Tibial artery (tissue), 4 donors: ENCODE measurements at regions of chr19 and their contacts with region 1.

Region 1: DNA sequence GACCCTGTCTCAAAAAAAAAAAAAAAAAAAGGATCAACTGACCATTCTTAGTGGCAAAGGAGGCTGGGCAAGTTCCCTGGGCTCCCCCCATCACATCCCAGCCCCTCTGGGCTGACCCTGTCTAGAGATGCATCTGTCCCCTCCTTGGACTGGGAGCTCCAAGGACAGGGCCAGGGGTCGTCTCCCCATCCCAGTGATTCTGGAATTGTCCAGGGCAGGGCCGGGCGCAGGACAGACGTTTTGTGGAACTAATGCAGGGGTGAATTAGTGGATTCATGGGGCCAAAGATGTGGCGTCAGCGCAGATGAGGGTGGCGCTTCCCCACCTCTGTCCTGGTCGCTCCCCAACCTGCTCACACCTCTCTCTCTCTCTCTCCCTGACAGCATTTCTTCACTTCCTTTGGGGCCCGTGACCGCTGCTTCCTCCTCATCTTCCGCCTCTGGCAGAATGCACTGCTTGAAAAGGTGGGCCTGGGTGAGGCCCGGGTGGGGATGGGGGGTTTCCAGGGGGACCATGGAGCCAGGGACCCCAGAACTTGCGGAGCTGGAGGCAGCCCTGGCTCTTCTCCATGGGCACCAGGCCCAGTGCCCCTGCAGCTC is 11.1 kb downstream of the GRAMD1A start:
- DNase-seq: no peak
- H3K4me3 ChIP-seq: no peak overlapping the region
- H3K27ac ChIP-seq: no peak overlapping the region
- H3K4me1 ChIP-seq: peaks cover 0 to 5% (median 2%) of the 10 kb centered on the region in 4 donors
- H3K27me3 ChIP-seq: no peaks in the 10 kb centered on the region
- CTCF ChIP-seq: no peak

Region 2: GRCh38 chr19:34972163-34972705 is 39.0 kb before region 1 on chr19:
- intact Hi-C with region 1: loop called (anchors 2 kb)
- DNase-seq: no peak
- H3K4me3 ChIP-seq: no peak overlapping the region
- H3K27ac ChIP-seq: no peak overlapping the region
- H3K4me1 ChIP-seq: peaks cover 0 to 8% (median 3%) of the 10 kb centered on the region in 4 donors
- H3K27me3 ChIP-seq: no peaks in the 10 kb centered on the region
- CTCF ChIP-seq: no peak

Region 3: DNA sequence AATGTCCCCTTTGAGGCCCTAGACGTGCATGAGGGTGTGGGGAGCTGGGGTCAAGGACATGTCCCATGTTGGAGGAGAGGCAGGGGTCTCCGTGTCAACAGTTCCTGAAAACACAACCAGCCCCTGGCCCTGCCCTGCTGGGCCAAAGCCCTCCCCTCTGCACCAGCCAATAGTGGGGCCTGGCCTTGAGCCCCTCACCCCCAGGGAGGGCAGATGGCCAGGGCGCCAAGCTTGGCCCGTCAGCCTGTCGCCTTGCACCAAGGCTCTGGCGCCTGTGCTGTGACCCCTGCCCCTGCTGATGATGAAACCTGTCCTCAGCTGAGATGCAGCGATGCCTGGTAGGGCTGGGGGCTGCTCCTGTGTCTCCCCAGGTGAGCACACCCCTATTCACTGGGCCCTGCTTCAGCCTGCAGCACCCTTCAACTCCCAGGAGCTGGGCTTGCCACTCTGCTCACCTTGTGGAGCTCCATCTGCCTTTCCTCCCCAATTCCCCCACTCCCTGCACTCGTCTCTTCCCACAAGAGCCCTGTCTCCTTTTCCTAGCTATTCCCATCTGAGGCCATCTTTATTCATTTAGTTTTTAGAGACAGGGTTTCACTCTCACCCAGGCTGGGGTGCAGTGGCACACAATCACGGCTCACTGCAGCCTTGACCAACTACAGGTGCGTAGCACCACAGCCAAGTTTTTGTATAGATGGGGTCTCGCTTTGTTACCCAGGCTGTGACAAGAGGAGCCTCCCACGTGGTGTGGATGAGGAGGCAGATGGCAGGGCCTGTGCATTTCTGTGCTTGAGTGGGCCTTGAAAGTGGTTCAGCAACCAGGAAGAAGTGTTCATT is 269.0 kb after region 1 on chr19:
- intact Hi-C with region 1: no loop called
- DNase-seq: no peak
- H3K4me3 ChIP-seq: no peak overlapping the region
- H3K27ac ChIP-seq: no peak overlapping the region
- H3K4me1 ChIP-seq: peaks cover 0 to 9% (median 1%) of the 10 kb centered on the region in 4 donors
- H3K27me3 ChIP-seq: peaks cover 0 to 8% of the 10 kb centered on the region in 2 donors
- CTCF ChIP-seq: no peak